ENCODE measurements at regions of chr13 and their contacts with region 1.

Region 1: GRCh38 chr13:78102121-78102677 is 183.6 kb upstream of the EDNRB start:
- H3K4me3 Mint-ChIP-seq: no peak overlapping the region
- H3K27ac Mint-ChIP-seq: no peak overlapping the region
- H3K4me1 Mint-ChIP-seq: peaks cover 18% of the 10 kb centered on the region
- H3K27me3 Mint-ChIP-seq: no peaks in the 10 kb centered on the region

Region 2: DNA sequence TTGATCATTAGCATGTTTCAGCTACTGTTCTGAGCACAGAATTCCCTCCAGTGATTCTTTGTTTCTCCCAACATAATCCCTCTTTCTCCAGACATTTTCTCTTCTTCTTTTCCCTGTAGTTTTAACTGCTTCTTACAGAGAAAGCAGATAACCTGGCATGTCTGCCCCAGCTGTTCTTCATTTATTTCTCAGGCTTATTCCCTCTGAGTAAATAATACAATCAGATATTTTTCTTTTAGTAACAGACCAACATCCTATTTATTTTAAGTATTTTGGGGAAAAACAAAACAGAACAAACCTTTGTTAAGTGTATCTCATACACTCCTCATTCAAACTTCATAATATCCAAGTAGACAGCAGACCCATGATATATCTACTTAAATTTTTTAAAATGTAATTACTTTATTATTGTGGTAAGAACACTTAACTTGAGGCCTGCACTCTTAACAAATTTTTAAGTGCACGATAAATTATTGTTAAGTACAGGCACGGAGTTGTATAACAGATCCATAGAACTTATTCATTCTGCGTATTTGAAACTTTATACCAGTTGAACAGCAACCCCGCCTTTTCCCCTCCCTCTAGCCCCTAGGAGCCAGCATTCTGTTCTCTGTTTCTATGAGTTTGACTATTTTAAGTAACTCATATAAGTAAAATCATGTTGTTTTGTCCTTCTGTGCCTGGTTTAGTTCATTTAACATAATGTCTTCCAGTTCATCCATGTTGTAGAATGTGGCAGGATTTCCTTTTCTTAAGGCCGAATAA is 1926.1 kb before region 1 on chr13:
- intact Hi-C with region 1: no loop called
- H3K4me3 Mint-ChIP-seq: no peak overlapping the region
- H3K27ac Mint-ChIP-seq: no peak overlapping the region
- H3K4me1 Mint-ChIP-seq: no peaks in the 10 kb centered on the region
- H3K27me3 Mint-ChIP-seq: no peaks in the 10 kb centered on the region

Region 3: DNA sequence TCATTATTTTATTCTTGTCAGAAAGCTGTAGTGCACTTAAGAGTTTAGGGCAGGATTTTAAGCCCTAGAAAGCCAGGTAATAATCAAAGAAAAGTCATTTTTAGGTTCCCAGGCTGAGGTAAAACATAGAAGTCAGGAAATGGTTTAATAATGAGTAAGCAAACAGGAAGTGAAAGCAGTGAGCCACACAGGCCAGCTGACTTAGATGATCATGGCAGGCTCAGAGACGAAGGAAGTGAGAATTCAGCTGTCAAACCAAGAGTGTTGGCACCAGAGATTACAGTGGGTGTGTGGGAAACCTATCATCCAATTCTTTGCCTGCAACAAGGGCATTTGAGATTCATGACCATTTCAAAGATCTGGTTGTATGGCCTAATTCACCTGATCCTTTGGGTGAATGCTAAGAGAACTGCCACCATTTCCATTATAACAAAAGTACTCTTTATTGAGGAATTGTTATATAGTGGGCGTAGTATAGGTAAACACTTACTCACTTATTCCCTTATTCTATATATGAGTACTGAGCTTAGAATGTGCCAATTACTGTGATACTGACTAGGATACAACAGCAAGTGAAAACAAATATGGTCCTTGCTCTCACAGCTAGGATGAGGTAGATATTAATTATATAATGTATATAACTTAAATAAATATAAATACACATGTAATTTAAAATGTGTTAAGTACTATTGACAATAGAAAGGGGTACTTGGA is 79.9 kb before region 1 on chr13:
- intact Hi-C with region 1: loop called (anchors 10 kb)
- H3K4me3 Mint-ChIP-seq: no peak overlapping the region
- H3K27ac Mint-ChIP-seq: no peak overlapping the region
- H3K4me1 Mint-ChIP-seq: peaks cover 18% of the 10 kb centered on the region
- H3K27me3 Mint-ChIP-seq: no peaks in the 10 kb centered on the region